Activated CD4-positive, alpha-beta memory T cell treated with anti-CD3 and anti-CD28 coated beads, Interleukin-2, amount 10 ng/mL, durations not matched to agents 7 days and 5 days (primary cell): ENCODE measurements at regions of chr1 and their contacts with region 1.

Region 1: DNA sequence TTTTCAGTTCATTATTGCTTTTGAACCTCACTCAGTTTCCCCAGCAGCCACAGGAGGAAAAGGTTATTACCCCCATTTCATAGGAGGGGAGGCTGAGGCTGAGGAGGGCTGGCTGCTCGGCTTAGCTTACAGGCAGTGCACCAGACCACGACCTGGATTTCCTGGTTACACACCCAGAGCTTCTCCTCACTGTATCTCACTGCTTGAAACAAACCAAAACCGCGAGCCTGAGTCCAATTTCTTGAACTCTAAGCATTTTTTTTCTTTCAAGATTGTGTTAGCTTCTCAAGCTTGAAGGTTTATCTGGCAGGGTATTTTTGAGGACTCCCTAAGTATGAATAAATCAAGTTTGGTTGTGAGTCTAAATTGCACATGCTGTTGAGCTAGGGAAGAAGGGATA is 188.9 kb upstream of the EDN2 start:
- DNase-seq: peak; percentile 75
- H3K4me3 Mint-ChIP-seq: peak overlapping the region; percentile 54
- H3K27ac Mint-ChIP-seq: peak overlapping the region; percentile 98
- H3K4me1 Mint-ChIP-seq: peaks cover 98% of the 10 kb centered on the region
- H3K27me3 Mint-ChIP-seq: no peaks in the 10 kb centered on the region

Region 2: DNA sequence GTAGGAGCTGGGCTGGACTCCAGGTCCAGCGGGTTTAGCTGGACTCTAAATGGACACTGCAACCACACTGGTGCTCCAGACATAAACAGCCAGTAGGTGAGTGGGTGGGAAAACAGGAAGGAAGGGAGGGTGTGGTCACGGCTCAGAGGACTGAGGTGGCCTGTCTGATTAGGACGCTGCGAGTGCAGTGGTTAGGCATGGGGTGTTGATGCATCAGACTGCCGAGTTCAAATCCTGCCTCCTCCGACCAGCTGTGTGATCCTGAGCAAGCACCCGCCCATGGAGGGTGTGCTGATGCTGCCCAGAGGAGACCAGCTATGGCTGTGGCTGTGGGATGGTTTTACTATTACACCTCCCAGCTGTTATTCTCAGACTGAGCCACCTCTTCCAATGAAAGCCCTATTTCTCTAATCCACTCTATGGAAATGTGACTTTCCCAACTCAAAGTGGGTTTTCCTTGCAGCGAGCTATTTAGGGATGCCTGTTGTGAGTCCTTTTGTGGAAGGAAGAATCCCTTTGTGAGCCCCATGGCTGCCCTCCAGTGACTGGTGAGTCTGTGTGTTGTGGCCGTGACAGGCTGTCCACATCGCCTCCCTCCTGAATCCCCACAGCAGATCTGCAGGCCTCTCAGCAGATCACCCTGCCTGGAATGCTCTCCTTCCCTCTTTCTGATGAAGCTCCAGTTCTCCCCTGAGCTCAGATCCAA is 132.3 kb before region 1 on chr1:
- CTCF ChIA-PET with region 1: no interaction called
- POLR2A ChIA-PET with region 1: no interaction called
- DNase-seq: no peak
- H3K4me3 Mint-ChIP-seq: no peak overlapping the region
- H3K27ac Mint-ChIP-seq: peak overlapping the region; percentile 42
- H3K4me1 Mint-ChIP-seq: peaks cover 11% of the 10 kb centered on the region
- H3K27me3 Mint-ChIP-seq: no peaks in the 10 kb centered on the region

Region 3: GRCh38 chr1:41641478-41641819 is 31.9 kb before region 1 on chr1:
- CTCF ChIA-PET with region 1: no interaction called
- POLR2A ChIA-PET with region 1: no interaction called
- DNase-seq: no peak
- H3K4me3 Mint-ChIP-seq: no peak overlapping the region
- H3K27ac Mint-ChIP-seq: no peak overlapping the region
- H3K4me1 Mint-ChIP-seq: peaks cover 33% of the 10 kb centered on the region
- H3K27me3 Mint-ChIP-seq: no peaks in the 10 kb centered on the region

Region 4: GRCh38 chr1:41683681-41684500 is 10.5 kb after region 1 on chr1:
- CTCF ChIA-PET with region 1: interaction called, 41 read pairs
- POLR2A ChIA-PET with region 1: interaction called, 88 read pairs
- DNase-seq: peak; percentile 71
- H3K4me3 Mint-ChIP-seq: peak overlapping the region; percentile 11
- H3K27ac Mint-ChIP-seq: peak overlapping the region; percentile 87
- H3K4me1 Mint-ChIP-seq: peaks cover 98% of the 10 kb centered on the region
- H3K27me3 Mint-ChIP-seq: no peaks in the 10 kb centered on the region

Region 5: GRCh38 chr1:41751804-41752513 is 78.6 kb after region 1 on chr1:
- CTCF ChIA-PET with region 1: interaction called, 9 read pairs
- POLR2A ChIA-PET with region 1: interaction called, 13 read pairs
- DNase-seq: no peak
- H3K4me3 Mint-ChIP-seq: no peak overlapping the region
- H3K27ac Mint-ChIP-seq: peak overlapping the region; percentile 92
- H3K4me1 Mint-ChIP-seq: peaks cover 72% of the 10 kb centered on the region
- H3K27me3 Mint-ChIP-seq: no peaks in the 10 kb centered on the region

Region 6: GRCh38 chr1:41802532-41803501 is 129.4 kb after region 1 on chr1:
- CTCF ChIA-PET with region 1: interaction called, 6 read pairs
- POLR2A ChIA-PET with region 1: interaction called, 25 read pairs
- DNase-seq: peak; percentile 61
- H3K4me3 Mint-ChIP-seq: peak overlapping the region; percentile 33
- H3K27ac Mint-ChIP-seq: peak overlapping the region; percentile 89
- H3K4me1 Mint-ChIP-seq: peaks cover 91% of the 10 kb centered on the region
- H3K27me3 Mint-ChIP-seq: no peaks in the 10 kb centered on the region

Region 7: GRCh38 chr1:41891199-41891896 is 218.0 kb after region 1 on chr1:
- CTCF ChIA-PET with region 1: no interaction called
- POLR2A ChIA-PET with region 1: interaction called, 14 read pairs
- DNase-seq: peak; percentile 70
- H3K4me3 Mint-ChIP-seq: peak overlapping the region; percentile 79
- H3K27ac Mint-ChIP-seq: peak overlapping the region; percentile 94
- H3K4me1 Mint-ChIP-seq: peaks cover 75% of the 10 kb centered on the region
- H3K27me3 Mint-ChIP-seq: no peaks in the 10 kb centered on the region